GM10248 (cell line): ENCODE measurements at regions of chr3 and their contacts with region 1.

Region 1: DNA sequence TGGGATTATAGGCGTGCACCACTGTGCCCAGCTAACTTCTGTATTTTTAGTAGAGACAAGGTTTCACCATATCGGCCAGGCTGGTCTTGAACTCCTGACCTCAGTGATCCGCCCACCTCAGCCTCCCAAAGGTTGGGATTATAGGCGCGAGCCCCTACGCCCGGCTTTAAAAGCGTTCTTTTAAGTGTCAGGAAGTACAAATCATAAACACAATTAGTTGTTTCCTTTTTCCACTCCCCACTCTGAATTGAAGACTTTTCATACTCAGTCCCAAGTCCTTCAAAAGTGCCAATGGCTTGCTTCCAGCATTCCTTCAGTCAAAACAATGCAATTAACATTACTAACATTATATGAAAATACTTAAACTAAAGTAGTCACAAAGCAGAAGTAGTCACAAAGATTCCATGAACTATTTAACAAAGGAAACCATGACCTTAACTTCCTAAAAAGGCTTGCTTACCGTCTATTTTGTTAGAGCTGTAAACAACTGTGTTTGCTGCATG is 8.1 kb downstream of the WDR82 start:
- DNase-seq: no peak
- CTCF ChIP-seq: no peak

Region 2: DNA sequence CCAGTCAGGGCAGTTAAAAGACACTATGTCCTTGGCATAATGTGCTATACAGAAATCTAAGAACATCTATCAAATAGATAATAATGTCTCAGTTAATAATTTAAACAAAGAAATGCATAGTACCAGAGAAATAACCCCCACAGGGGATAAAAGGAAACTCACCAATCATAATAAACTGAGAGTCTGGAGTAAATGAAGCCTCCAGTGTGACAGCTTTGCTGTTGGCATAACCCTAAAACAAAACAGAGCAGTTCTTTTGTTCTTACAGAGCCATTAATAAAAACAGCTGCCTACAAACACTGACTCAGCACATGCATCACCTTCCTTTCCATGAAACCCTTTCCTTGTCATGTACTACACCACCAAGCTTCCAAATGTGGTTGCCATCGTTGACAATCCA is 11.3 kb before region 1 on chr3:
- CTCF ChIA-PET with region 1: interaction called, 17 read pairs
- POLR2A ChIA-PET with region 1: no interaction called
- DNase-seq: no peak
- CTCF ChIP-seq: no peak

Region 3: DNA sequence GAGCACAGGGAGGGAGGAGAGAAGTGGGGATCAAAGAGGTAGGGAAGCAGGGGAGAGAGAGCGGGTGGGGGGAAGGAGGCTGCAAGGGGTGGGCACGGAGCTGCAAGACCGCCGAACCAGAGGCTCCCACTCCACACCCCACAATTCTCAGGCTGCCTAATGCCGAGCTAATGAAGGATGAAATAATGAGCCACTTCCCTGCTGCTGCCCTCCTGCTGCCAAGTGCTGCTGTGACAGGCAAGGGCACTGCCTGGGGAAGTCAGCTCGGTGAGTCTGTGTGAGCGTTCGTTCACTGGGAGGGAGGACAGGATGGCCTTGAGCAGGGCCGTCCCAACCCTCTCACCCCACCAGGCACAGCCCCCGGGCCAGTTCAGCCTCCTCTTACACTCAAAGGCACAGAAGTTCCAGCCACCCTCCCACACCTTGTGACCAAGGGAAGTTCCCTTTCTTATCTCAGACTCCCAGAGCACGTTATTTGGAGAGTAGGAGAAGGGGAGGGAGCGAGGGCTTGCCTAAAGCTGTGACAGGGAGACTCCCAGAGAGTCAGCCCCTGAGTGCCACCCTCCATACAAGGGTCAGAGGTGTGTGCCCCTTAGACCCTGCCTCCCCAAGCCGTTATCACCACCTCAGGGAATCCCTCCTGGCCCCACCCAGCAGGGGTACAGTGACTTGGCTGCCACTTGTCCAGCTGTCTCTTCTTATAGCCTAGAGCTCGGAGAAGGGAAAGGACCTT is 29.7 kb after region 1 on chr3:
- CTCF ChIA-PET with region 1: no interaction called
- POLR2A ChIA-PET with region 1: no interaction called
- DNase-seq: peak; percentile 63
- CTCF ChIP-seq: no peak